Activated T-helper 2 cell treated with anti-CD3 and anti-CD28 coated beads, Interferon-gamma antibody, Interleukin-2, Interleukin-4, amounts not matched to agents 10 μg/mL and 5 μg/mL and 100 μg/mL, durations not matched to agents 14 hours and 24 hours and 36 hours (primary cell): ENCODE measurements at regions of chr11 and their contacts with region 1.

Region 1: DNA sequence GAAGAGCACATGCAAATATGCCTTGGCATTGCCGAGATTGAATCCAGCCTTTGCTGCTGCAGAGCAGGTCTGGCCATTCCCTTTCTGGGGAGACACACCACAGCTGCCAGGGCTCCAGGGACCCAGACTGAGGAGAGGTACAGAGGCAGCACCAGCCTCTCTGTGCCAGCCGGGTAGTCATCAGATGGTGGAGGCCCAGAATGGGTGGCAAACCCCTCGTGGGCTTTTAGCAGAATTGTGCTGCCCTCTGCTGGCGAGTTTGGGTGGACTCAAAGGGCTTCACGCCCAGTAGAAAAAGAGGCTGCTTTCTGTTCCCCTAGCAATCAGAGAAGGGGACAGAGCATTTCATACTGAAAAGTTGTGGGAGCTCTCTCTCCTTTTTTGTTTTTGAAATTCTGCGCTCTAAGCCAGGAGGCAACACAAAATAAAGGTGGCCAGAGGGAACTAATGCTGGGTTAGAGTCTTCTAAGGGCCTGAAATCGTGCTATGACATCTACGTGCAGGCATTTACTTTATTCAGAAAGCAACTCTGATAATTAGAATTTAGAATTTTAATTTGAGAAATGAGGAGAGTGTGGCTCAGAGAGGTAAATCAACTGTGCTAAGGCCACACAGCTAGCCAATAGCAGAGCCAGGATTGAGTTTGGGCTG is 158.8 kb upstream of the NAV2 start:
- DNase-seq: peak; percentile 41
- H3K4me3 Mint-ChIP-seq: no peak overlapping the region
- H3K27ac Mint-ChIP-seq: no peak overlapping the region
- H3K4me1 Mint-ChIP-seq: no peaks in the 10 kb centered on the region
- H3K27me3 Mint-ChIP-seq: peaks cover 6% of the 10 kb centered on the region

Region 2: DNA sequence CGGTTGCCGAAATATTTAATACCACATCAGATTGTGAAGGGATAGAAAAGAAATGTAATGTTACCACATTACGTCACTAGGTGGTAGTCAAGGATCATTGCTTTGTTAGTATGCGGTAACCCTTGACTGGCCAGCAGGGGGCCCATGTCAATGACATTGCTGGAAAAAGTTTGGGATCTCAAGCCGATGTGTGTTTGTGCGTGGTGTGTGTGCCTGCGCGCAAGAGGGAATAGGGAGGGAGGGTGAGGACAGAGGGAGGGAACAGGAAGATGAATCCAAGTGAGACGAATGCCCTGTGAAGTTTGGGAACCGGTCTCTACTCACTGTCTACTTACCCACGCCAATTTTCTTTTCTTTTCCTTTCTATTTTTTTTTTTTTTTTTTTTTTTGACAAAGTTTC is 482.6 kb before region 1 on chr11:
- intact Hi-C with region 1: loop called (anchors 1 kb)
- DNase-seq: peak; percentile 26
- H3K4me3 Mint-ChIP-seq: peak overlapping the region; percentile 22
- H3K27ac Mint-ChIP-seq: no peak overlapping the region
- H3K4me1 Mint-ChIP-seq: peaks cover 2% of the 10 kb centered on the region
- H3K27me3 Mint-ChIP-seq: peaks cover 21% of the 10 kb centered on the region

Region 3: DNA sequence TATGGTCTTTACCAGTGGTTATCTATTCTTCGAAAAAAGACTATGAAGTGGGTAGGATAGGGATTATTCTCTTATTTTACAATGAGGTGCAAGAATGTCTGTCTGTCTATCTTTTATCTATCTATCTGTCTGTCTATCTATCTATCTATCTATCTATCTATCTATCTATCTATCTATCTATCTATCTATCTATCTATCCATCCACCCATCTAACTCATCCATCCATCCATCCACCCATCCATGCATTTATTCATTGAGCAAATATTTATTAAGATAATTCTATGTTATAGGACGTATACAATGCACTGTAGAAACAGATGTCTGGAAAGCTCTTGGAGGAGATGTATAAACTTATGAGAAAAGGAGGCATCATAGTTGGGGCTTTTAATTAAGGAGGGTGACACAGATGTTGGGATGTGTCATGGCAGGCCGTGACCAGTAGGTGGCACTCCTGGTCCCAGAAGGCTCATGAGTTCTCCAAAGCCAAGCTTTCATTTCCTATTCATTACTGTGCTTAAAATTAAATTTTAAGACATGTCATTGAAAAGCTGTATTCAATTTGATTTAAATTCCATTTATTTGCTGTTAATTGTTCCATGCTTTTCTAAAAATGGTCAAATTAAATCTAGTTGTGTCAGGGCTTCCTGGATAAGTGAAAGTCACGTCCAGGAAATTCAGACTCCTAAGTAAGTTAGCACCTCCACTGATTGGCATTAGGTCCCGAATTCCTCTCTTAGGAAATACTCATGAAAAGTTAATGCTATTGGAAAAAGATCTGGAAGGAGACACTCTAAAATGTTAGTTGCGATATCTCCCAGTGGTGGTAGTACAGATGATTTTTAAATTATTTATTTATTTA is 294.1 kb before region 1 on chr11:
- intact Hi-C with region 1: loop called (anchors 1 kb)
- DNase-seq: peak; percentile 48
- H3K4me3 Mint-ChIP-seq: no peak overlapping the region
- H3K27ac Mint-ChIP-seq: no peak overlapping the region
- H3K4me1 Mint-ChIP-seq: peaks cover 1% of the 10 kb centered on the region
- H3K27me3 Mint-ChIP-seq: peaks cover 8% of the 10 kb centered on the region

Region 4: DNA sequence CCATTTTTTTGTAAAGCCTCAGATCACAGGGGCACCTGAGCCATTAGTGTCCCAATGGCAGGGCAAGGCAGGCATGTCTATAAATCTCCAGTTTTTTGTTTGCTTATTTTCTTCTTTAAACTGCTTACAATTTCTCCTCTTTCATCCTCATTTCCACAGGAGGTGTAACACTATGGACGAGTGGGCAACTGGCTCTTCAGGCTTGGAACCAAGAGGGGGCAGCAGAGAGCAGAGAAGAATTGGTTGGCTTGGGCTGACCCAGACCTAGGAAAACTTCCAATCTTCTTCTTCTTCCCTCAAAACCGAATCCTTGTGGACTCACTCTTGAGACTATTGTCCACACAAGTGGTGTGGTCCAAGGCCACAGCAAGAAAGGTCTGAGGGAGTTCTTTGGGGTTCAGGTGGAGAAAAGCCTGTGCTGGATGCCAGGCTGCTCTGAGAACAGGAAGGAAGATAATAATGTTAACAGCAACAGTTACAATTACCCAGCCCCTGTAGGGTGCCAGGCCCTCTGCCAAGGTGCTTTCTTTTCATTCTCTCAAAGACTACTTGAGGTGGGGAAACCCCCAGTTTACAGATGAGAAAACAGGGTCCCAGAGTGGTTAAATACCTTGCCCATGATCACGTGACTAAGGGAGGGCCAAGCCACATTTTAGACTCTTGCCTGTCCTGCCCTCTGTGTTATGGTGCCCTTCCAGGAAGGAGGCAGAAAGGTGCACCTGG is 242.3 kb before region 1 on chr11:
- intact Hi-C with region 1: loop called (anchors 1 kb)
- DNase-seq: peak; percentile 14
- H3K4me3 Mint-ChIP-seq: no peak overlapping the region
- H3K27ac Mint-ChIP-seq: no peak overlapping the region
- H3K4me1 Mint-ChIP-seq: no peaks in the 10 kb centered on the region
- H3K27me3 Mint-ChIP-seq: peaks cover 2% of the 10 kb centered on the region